ENCODE measurements at regions of chr7 and their contacts with region 1.

Region 1: GRCh38 chr7:1503816-1504775 is at the start of gene INTS1:
- DNase-seq: peak; percentile 96
- ATAC-seq: peak; percentile 94
- total RNA-seq, gene INTS1: 25.8 TPM

Region 2: DNA sequence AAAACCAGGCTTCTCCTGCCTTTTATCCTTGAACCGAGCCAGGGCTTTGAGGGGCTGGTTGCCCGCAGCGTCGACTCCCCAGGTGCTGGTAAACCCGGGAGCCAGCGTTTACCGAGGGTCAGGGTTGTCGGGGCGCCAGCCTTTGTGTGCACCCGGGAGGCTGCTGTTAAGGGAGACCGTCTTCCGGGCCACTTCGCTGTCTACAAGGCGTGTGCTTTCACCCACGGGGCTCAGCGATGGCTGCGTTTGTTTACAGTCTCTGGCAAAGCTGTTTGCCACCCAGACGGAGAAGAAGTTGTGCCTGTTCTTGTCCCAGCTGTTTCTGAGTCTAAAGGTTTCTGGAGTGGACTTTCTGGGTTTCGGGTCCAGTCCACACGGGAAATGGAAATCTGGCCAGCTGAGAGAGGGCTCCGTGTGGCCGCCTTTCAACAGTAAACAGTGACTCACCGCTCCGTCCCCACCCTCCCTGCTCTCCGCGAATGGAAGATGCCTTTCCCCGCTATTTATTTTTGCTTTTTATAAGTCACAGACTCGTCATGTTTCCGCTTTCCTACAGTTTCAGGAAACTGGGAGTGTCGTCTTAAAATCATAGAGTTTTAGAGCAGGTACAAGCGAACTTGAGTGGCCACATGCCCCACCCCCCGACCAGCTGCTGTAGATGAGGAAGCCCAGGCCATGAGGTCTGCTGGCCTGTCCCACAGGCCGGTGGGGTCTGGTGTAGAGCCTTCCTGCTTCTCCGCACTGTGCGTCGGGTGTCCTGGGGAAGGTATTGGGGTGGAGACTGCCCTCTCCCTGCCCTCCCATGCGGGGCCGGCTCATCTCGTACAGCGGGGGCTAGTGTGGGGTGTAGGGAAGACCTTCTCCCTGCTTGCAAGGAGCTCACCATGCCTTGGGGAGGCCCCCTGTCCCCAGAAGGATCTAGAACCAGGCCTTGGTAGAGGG is 28.7 kb after region 1 on chr7:
- intact Hi-C with region 1: loop called (anchors 2 kb)
- DNase-seq: peak; percentile 91
- ATAC-seq: peak; percentile 46

Region 3: DNA sequence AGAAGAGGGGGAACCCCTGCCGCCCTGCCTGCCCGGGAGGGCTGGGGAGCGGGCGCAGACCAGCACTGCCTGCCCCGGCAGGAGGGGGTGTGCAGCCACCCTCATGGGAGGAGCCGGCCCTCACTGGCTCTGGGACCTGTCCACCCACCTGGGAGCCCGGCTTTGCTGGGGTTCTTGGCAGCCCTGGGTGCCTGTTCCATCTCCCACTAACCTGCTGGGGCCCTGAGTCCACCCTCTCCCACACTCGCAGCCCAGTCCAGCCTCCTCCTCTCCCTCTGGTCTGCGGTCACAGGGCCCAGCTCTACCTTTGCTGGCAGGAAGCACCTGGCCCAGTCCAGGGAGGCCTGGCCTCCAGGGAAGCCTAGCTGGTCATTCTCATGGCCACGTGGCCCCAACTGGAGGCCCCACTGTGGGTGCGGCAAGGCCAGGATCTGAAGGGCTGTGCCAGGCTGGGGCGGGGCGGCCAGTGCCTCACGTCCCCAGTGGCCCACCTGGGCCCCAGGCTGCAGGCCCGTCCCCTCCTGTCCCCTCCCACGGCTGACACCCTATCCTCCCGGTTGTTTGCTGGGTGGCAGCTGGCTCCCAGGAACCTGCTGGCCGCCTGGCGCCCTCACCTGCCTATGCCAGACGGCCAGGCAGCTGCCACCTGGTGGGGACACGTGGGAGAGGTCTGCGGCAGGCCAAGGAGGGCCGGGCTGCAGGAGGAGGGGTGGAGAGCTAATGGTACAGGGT is 51.9 kb after region 1 on chr7 and contains the start of gene TMEM184A:
- intact Hi-C with region 1: loop called (anchors 1 kb)
- DNase-seq: peak; percentile 76
- ATAC-seq: peak; percentile 32
- total RNA-seq, gene TMEM184A: 0.32 TPM

Measured in Right ventricle myocardium inferior (tissue), 1 donor.